ENCODE measurements at regions of chr18 and their contacts with region 1.

Region 1: DNA sequence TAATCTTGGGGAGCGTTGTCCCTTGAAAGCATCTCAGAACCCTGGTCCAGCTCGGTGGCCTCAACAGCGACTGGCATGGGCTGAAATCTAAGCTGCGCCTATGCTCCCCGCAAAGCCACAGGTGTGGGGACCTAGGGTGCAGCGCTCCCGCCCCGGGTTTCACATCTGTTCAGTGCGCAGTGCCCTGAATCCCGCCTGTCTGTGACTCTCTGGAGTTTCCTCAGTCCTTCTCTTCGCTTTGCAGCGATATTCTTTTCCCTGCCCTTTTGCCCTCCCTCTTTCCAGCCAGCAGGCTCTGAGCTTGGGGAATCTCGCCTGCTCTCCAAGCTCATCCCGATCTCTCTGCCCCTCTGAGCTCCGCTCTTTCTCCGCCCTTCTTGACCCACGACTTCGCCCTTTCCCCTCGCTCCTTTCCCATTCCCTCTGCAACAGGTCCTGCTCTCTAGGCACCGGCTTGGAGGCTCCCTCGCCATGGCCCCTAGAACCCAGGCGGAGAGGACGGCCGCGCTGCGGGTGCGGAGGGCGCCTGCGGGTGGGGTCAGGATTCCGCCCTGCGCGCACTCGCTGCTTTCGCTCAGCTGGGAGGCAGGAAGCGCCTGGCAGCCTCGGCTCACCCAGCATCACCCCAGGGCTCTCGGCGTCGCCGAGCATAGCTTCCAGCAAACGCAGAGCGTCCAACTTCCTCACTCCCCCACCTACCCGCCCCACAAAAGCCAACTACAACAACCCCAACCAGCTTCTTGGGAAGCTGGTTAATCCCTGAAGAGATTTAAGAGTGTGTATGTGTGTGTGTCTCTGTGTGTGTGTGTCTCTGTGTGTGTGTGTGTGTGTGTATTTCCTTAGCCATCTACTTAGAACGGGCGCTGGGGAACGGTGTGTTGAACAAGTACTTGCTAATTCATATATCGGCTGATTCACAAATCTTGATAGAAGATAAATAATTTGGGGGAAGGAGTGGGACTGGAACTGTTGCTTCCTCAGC is 1.1 kb downstream of the GRP start:
- DNase-seq: peak; percentile 18
- H3K4me3 ChIP-seq: peak overlapping the region in 2 of 3 experiments; percentile 15 to 31
- H3K27ac ChIP-seq: no peak overlapping the region
- H3K4me1 ChIP-seq: peaks cover 13% of the 10 kb centered on the region
- H3K27me3 ChIP-seq: peaks cover 49% of the 10 kb centered on the region
- CTCF ChIP-seq: no peak

Region 2: DNA sequence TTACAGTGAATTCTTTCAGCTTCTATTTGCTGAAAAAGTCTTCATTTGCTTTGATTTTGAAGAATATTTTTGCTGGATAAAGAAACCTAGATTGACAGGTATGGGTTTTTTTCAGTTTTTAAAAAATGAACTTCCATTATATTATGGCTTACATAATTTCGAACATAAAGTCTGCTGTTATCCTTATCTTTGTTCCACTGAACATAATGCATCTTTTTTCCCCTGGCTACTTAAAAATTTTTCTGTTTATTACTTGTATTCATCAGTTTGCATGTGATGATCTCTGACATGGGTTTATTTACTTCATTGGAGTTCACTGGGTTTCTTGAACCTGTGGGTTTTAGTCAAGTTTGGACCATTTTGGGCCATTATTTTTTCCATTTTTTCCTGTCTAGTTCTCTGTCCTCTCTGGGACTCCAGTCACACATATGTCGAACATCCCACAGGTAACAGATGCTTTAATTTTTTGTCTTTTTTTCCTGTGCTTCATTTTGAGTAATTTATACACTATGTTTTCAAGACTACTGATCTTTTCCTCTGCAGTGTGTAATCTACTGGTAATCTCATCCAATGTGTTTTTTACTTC is 48.3 kb before region 1 on chr18:
- CTCF ChIA-PET with region 1: no interaction called
- dilution Hi-C with region 1: loop called (anchors 5 kb)
- in situ Hi-C with region 1: no loop called
- intact Hi-C with region 1: no loop called
- DNase-seq: no peak
- H3K4me3 ChIP-seq: no peak overlapping the region
- H3K27ac ChIP-seq: no peak overlapping the region
- H3K4me1 ChIP-seq: no peaks in the 10 kb centered on the region
- H3K27me3 ChIP-seq: no peaks in the 10 kb centered on the region
- CTCF ChIP-seq: no peak

Region 3: GRCh38 chr18:59200787-59201186 is 20.3 kb before region 1 on chr18:
- CTCF ChIA-PET with region 1: interaction called, 11 read pairs
- dilution Hi-C with region 1: no loop called
- in situ Hi-C with region 1: no loop called
- intact Hi-C with region 1: no loop called
- DNase-seq: peak; percentile 15
- H3K4me3 ChIP-seq: no peak overlapping the region
- H3K27ac ChIP-seq: no peak overlapping the region
- H3K4me1 ChIP-seq: no peaks in the 10 kb centered on the region
- H3K27me3 ChIP-seq: peaks cover 4% of the 10 kb centered on the region
- CTCF ChIP-seq: peak; percentile 25 to 44

Region 4: DNA sequence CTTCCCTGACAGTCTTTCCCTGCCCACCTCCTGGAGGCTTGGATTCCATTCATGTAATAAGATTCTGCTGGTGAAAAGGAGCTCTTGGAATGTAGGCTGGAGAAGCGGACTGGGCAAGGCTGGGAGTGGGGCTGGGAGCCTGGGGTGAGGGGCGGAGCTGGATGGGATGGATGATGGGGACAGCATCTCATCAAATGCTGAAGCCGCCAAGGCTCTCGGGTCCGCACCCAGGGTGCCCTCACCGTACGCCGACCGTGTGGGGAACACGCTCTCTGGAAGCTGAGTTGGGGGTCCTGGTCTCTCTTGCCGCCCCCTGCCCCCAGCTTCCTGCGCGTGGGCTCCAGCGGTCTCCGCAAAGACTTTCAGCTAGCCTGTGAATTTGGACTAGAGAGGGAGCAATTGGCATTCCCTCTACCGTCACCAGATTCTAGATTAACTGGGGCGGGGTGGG is 43.1 kb after region 1 on chr18:
- CTCF ChIA-PET with region 1: no interaction called
- dilution Hi-C with region 1: no loop called
- in situ Hi-C with region 1: no loop called
- intact Hi-C with region 1: no loop called
- DNase-seq: no peak
- H3K4me3 ChIP-seq: no peak overlapping the region
- H3K27ac ChIP-seq: no peak overlapping the region
- H3K4me1 ChIP-seq: peaks cover 31% of the 10 kb centered on the region
- H3K27me3 ChIP-seq: peaks cover 51% of the 10 kb centered on the region
- CTCF ChIP-seq: no peak